CD8-positive, alpha-beta T cell (primary cell): ENCODE measurements at regions of chr21 and their contacts with region 1.

Region 1: GRCh38 chr21:37424396-37424795 is 57.8 kb downstream of the DYRK1A start:
- DNase-seq: no peak
- ATAC-seq: no peak
- H3K4me3 ChIP-seq: no peak overlapping the region
- H3K4me3 Mint-ChIP-seq: no peak overlapping the region
- H3K27ac ChIP-seq: no peak overlapping the region
- H3K27ac Mint-ChIP-seq: no peak overlapping the region
- H3K4me1 ChIP-seq: peaks cover 9% of the 10 kb centered on the region
- H3K4me1 Mint-ChIP-seq: peaks cover 66% of the 10 kb centered on the region
- H3K27me3 ChIP-seq: no peaks in the 10 kb centered on the region
- H3K27me3 Mint-ChIP-seq: no peaks in the 10 kb centered on the region
- CTCF ChIP-seq: no peak

Region 2: GRCh38 chr21:37407719-37408420 is 16.5 kb before region 1 on chr21:
- CTCF ChIA-PET with region 1: no interaction called
- POLR2A ChIA-PET with region 1: no interaction called
- intact Hi-C with region 1: loop called in 1 of 2 experiments (anchors 1 kb)
- DNase-seq: peak in 1 of 9 experiments; percentile 26
- ATAC-seq: no peak
- H3K4me3 ChIP-seq: no peak overlapping the region
- H3K4me3 Mint-ChIP-seq: peak overlapping the region; percentile 23
- H3K27ac ChIP-seq: peak overlapping the region in 1 of 2 experiments; percentile 3
- H3K27ac Mint-ChIP-seq: peak overlapping the region; percentile 57
- H3K4me1 ChIP-seq: peaks cover 82% of the 10 kb centered on the region
- H3K4me1 Mint-ChIP-seq: peaks cover 84% of the 10 kb centered on the region
- H3K27me3 ChIP-seq: no peaks in the 10 kb centered on the region
- H3K27me3 Mint-ChIP-seq: no peaks in the 10 kb centered on the region
- CTCF ChIP-seq: no peak

Region 3: GRCh38 chr21:37463083-37463801 is 38.8 kb after region 1 on chr21:
- CTCF ChIA-PET with region 1: no interaction called
- POLR2A ChIA-PET with region 1: no interaction called
- intact Hi-C with region 1: no loop called
- DNase-seq: peak in 2 of 9 experiments; percentile 53 to 67
- ATAC-seq: peak; percentile 69
- H3K4me3 ChIP-seq: no peak overlapping the region
- H3K4me3 Mint-ChIP-seq: peak overlapping the region; percentile 30
- H3K27ac ChIP-seq: peak overlapping the region in 1 of 2 experiments; percentile 14
- H3K27ac Mint-ChIP-seq: peak overlapping the region; percentile 86
- H3K4me1 ChIP-seq: peaks cover 61% of the 10 kb centered on the region
- H3K4me1 Mint-ChIP-seq: peaks cover 88% of the 10 kb centered on the region
- H3K27me3 ChIP-seq: no peaks in the 10 kb centered on the region
- H3K27me3 Mint-ChIP-seq: no peaks in the 10 kb centered on the region
- CTCF ChIP-seq: peak; percentile 50